HEK293T (cell line): ENCODE measurements at regions of chr17 and their contacts with region 1.

Region 1: GRCh38 chr17:40075201-40075941 is 12.6 kb downstream of the THRA start:
- DNase-seq: peak; percentile 57

Region 2: GRCh38 chr17:40019140-40019991 is 56.0 kb before region 1 on chr17:
- CTCF ChIA-PET with region 1: interaction called, 12 read pairs
- POLR2A ChIA-PET with region 1: interaction called, 3 read pairs
- DNase-seq: no peak

Region 3: GRCh38 chr17:40026816-40027613 is 48.4 kb before region 1 on chr17:
- CTCF ChIA-PET with region 1: interaction called, 13 read pairs
- POLR2A ChIA-PET with region 1: no interaction called
- DNase-seq: peak; percentile 82

Region 4: GRCh38 chr17:40038882-40039513 is 36.4 kb before region 1 on chr17:
- CTCF ChIA-PET with region 1: interaction called, 17 read pairs
- POLR2A ChIA-PET with region 1: no interaction called
- DNase-seq: peak; percentile 28

Region 5: GRCh38 chr17:40062329-40063186 is 12.8 kb before region 1 on chr17 and contains the start of gene THRA:
- CTCF ChIA-PET with region 1: interaction called, 45 read pairs
- POLR2A ChIA-PET with region 1: interaction called, 10 read pairs
- DNase-seq: peak; percentile 71

Region 6: DNA sequence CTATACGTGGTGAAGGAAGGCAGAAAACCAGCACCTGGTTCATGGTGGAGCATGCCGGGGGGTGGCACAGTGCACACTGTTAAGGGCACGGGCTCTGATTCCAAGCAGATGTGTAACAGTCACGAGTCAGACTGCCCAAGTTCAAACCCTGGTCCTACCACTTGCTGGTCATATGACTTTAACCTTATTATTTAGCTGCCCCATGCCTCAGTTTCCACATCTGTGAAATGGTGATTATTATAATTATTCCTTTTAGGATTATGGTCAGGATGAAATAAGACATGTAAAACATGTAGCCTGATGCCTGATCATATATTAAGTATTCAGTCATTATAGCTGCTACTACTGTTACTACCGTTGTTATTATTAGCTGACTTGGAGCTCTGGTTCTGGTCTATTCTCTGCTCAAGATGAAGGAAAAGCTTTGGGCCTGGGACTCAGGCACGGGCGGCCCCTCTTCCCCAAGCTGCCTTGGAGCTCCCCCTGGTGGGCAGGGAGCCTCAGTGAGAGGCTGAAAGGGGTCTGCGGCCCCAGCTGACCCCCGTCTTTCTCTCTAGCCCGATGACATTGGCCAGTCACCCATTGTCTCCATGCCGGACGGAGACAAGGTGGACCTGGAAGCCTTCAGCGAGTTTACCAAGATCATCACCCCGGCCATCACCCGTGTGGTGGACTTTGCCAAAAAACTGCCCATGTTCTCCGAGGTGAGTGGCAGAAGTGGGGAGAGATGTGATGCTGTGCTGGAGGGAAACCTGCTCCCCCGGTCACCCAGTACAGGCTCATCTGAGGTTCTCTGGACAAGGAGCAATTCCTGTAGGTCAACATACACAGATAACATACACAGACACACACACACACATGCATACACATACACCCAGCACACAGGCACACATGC is 11.0 kb after region 1 on chr17:
- CTCF ChIA-PET with region 1: interaction called, 29 read pairs
- POLR2A ChIA-PET with region 1: no interaction called
- DNase-seq: peak; percentile 73

Region 7: DNA sequence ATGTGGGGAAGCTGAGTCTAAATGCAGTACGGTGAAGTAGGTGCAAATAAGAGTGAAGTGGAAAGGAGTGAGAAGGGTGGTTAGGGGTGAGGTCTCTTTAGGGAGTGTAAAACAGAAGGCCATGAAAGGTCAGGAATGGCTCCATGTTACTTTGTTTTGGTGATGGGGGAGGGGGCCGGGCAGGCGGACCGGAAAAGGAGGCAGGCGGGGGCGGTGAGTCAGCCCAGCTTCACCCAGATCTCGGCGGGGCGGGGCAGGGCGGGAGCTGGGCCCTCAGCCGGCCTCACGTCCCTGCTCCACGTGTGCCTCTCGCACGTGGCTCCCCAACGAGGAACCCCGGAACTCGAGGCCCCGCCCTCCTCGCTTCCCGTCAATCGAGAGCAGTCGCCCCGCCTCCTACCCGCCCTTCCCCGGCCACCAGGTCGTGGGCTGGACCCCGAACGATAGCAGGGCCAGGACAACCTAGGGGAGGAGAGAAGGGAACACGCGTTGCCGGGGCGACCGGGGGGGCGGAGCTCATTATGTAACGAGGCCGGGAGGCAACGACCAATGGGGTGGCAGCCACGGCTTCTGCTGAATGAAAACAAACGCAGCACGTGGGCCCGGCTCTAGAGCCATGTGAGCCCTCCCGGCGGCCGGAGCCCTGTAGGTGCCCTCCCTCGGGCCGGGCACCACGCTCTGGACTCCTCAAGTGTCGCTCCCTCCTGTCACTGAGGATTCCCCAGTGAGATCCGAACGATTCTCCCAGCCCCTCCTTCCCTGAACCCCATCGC is 23.7 kb after region 1 on chr17:
- CTCF ChIA-PET with region 1: interaction called, 19 read pairs
- POLR2A ChIA-PET with region 1: interaction called, 4 read pairs
- DNase-seq: peak; percentile 80